ENCODE measurements at regions of chr1 and their contacts with region 1.

Region 1: GRCh38 chr1:63868268-63868781 is 94.5 kb downstream of the ROR1 start:
- DNase-seq: peak; percentile 59 to 72
- H3K4me3 ChIP-seq: no peak overlapping the region
- H3K27ac ChIP-seq: peak overlapping the region; percentile 44 to 70
- H3K4me1 ChIP-seq: peaks cover 6 to 9% of the 10 kb centered on the region in 2 donors
- H3K27me3 ChIP-seq: no peaks in the 10 kb centered on the region
- CTCF ChIP-seq: peak; percentile 15 to 41 (median 32)
- POLR2A ChIP-seq: no peak

Region 2: DNA sequence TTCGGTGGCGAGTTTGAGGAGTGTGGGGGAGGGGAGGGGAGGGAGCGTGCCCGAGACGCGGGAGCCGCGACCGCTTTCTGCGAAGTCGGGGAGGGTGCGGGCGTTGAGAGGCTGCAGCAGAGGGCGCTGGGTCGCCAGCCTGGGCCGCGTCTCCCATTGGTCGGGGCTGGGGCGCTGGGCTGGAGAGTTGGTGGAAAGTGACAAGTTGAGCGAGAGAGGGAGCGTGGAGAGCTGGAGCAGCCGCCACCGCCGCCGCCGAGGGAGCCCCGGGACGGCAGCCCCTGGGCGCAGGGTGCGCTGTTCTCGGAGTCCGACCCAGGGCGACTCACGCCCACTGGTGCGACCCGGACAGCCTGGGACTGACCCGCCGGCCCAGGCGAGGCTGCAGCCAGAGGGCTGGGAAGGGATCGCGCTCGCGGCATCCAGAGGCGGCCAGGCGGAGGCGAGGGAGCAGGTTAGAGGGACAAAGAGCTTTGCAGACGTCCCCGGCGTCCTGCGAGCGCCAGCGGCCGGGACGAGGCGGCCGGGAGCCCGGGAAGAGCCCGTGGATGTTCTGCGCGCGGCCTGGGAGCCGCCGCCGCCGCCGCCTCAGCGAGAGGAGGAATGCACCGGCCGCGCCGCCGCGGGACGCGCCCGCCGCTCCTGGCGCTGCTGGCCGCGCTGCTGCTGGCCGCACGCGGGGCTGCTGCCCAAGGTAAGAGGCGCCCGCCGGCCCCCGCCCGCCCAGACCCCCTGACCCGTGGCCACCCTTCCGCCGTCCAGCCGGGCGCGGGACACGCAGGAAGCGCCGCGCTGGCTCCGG is 94.3 kb before region 1 on chr1 and contains the start of gene ROR1:
- intact Hi-C with region 1: loop called (anchors 10 kb)
- DNase-seq: peak; percentile 84 to 88
- H3K4me3 ChIP-seq: peak within 1 kb of the TSS; percentile 61 to 78
- H3K27ac ChIP-seq: peak within 1 kb of the TSS; percentile 90 to 92
- H3K4me1 ChIP-seq: no peaks in the 10 kb centered on the region
- H3K27me3 ChIP-seq: no peaks in the 10 kb centered on the region
- CTCF ChIP-seq: peak; percentile 75 to 83 (median 78)
- POLR2A ChIP-seq: peak; percentile 35 to 59
- total RNA-seq, gene ROR1: 2.6 to 37.6 (median 11.5) TPM